Mammary epithelial cell (primary cell): ENCODE measurements at regions of chr10 and their contacts with region 1.

Region 1: DNA sequence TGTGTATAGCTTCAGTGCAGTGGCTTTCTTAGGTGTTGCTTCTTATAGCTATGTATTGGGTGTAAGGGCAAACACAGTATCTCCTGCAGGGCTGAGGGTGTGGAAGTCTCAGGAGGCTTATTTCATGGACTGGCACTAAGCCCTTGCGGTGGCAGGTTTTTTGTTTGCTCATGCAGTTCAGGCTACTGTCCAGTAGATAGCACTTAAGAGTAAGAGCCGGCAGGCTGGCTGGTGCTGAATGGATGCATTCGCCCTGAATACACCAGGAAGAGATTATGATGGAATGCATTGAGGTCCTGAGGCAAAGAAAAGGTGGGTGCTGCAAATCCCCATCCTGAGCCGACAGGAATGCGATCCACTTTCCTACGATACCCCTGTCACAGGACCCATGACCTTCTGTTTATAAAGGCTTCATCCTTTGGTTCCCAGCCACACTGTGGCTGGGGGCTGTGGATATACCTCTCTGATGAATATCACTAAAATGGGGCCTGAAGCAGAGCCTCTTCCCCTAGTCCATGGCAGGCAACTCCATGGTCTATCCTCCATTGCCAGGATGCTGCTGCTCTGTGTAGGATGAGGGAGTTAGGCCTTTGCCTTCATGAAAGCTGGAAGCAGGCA is 44.9 kb downstream of the ANXA8 start:
- DNase-seq: peak; percentile 62
- H3K4me3 ChIP-seq: no peak overlapping the region
- H3K27ac ChIP-seq: no peak overlapping the region
- H3K4me1 ChIP-seq: peaks cover 13% of the 10 kb centered on the region
- H3K27me3 ChIP-seq: no peaks in the 10 kb centered on the region
- CTCF ChIP-seq: peak; percentile 85 to 94

Region 2: DNA sequence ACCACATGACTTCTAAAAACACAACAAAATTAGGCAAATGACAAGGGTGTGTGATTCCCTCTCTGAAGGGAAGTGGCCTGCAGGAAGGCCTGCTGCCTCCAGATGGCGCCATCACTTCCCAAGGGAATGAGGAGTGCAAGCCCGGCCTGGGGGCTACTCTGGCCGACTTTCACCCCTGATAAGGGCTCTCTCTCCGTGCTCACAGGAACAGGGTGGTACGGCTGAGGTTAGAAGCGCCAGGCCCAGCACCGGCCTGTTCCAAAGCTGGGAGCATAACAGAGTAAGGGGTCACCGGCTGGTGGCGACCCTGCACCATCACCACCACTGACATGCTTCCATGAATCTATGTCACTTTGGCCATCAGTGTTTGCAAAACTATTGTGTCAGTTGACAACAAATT is 77.7 kb before region 1 on chr10:
- CTCF ChIA-PET with region 1: no interaction called
- dilution Hi-C with region 1: loop called (anchors 5 kb)
- in situ Hi-C with region 1: no loop called
- intact Hi-C with region 1: loop called (anchors 2 kb)
- DNase-seq: no peak
- H3K4me3 ChIP-seq: no peak overlapping the region
- H3K27ac ChIP-seq: no peak overlapping the region
- H3K4me1 ChIP-seq: peaks cover 4% of the 10 kb centered on the region
- H3K27me3 ChIP-seq: no peaks in the 10 kb centered on the region
- CTCF ChIP-seq: peak; percentile 94

Region 3: DNA sequence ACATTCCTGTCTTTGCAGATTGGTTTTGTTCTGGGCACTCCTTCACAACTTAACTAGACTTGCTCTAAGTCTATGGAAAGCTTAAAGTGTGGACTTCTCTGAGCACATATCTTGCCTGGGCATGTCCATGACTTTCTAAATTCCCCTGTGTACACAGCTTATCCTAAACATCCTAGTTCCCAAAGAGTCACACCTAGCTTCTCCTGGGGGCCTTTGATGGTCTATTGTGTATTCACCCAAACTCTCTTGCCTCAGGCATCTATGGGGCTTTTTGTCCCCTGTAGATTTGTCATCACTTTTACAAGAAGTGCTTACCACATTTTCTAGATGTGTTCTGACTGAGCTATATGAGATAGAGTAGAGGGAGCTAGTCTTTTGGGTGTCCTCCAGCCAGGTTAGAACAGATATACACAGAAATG is 42.6 kb before region 1 on chr10:
- CTCF ChIA-PET with region 1: no interaction called
- dilution Hi-C with region 1: no loop called
- in situ Hi-C with region 1: no loop called
- intact Hi-C with region 1: no loop called
- DNase-seq: peak; percentile 97
- H3K4me3 ChIP-seq: no peak overlapping the region
- H3K27ac ChIP-seq: peak overlapping the region; percentile 90
- H3K4me1 ChIP-seq: peaks cover 24% of the 10 kb centered on the region
- H3K27me3 ChIP-seq: no peaks in the 10 kb centered on the region
- CTCF ChIP-seq: no peak

Region 4: GRCh38 chr10:47423476-47423875 is 15.5 kb before region 1 on chr10:
- CTCF ChIA-PET with region 1: interaction called, 3 read pairs
- dilution Hi-C with region 1: no loop called
- in situ Hi-C with region 1: no loop called
- intact Hi-C with region 1: loop called (anchors 1 kb)
- DNase-seq: peak; percentile 33
- H3K4me3 ChIP-seq: no peak overlapping the region
- H3K27ac ChIP-seq: no peak overlapping the region
- H3K4me1 ChIP-seq: no peaks in the 10 kb centered on the region
- H3K27me3 ChIP-seq: no peaks in the 10 kb centered on the region
- CTCF ChIP-seq: no peak

Region 5: DNA sequence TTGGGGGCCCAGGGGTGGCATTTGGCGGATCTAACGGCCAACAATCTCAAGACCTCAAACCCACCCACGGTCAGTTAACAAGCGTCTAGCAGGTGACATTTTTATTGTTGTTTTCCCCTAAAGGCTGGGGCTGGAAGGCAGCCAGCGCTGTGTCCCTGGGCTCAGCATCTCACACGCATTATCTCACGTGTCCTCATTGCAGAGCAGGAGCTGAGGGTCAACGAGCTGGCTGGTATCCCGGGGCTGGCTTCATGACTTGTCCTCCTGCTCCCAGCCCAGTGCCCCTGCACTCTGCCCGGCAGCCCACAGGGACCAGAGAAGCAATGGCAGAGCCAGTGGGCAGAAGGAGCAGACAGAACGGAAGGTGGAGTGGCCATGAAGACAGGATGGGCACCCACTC is 1803.6 kb after region 1 on chr10:
- CTCF ChIA-PET with region 1: no interaction called
- dilution Hi-C with region 1: no loop called
- in situ Hi-C with region 1: no loop called
- intact Hi-C with region 1: no loop called
- DNase-seq: no peak
- H3K4me3 ChIP-seq: no peak overlapping the region
- H3K27ac ChIP-seq: no peak overlapping the region
- H3K4me1 ChIP-seq: no peaks in the 10 kb centered on the region
- H3K27me3 ChIP-seq: no peaks in the 10 kb centered on the region
- CTCF ChIP-seq: no peak